AG04450 (cell line): ENCODE measurements at regions of chr3 and their contacts with region 1.

Region 1: DNA sequence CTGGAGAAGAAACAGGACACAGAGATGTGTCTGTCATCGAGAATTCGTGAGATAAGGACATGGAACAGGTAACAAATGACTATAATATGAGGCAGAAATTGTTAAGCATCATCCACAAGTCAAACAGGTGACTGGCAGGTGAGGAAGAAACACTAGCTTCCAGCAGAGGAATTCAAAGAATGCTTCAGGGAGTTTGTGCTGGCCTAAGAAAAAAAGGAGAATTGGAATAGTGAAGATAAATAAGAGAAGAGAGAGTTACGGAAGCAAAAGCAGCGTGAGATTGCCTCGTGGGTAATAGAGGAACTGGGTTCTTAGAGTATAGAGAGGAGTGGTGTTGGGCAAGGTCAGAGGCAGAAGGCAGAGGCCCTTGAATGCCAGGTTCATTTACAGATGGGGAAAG is 22.9 kb upstream of the FGF12 start:
- DNase-seq: no peak
- H3K4me3 ChIP-seq: no peak overlapping the region
- H3K27ac ChIP-seq: no peak overlapping the region
- H3K27me3 ChIP-seq: no peaks in the 10 kb centered on the region
- CTCF ChIP-seq: no peak

Region 2: DNA sequence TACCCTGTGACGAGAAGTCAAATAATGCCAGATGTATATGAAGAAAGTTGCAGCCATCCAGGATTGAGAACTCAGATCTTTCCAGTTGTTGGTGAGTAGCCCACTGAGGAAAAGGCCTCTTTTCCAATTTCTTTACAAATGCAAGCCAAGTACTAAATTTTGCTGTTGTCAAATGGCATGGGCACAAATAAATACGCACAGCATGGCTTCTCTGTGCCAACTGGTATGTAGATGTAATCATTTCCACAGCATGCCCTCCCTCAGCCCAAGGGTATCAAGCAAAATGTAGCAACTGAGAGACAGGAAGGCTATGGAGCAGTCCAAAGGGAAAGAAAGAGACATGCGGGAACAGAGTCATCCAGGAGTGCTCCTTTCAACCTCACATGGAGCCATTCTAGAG is 128.3 kb before region 1 on chr3:
- CTCF ChIA-PET with region 1: interaction called, 14 read pairs
- POLR2A ChIA-PET with region 1: no interaction called
- DNase-seq: no peak
- H3K4me3 ChIP-seq: no peak overlapping the region
- H3K27ac ChIP-seq: no peak overlapping the region
- H3K27me3 ChIP-seq: no peaks in the 10 kb centered on the region
- CTCF ChIP-seq: no peak

Region 3: GRCh38 chr3:192700885-192701284 is 49.3 kb before region 1 on chr3:
- CTCF ChIA-PET with region 1: interaction called, 13 read pairs
- POLR2A ChIA-PET with region 1: no interaction called
- DNase-seq: no peak
- H3K4me3 ChIP-seq: no peak overlapping the region
- H3K27ac ChIP-seq: no peak overlapping the region
- H3K27me3 ChIP-seq: no peaks in the 10 kb centered on the region
- CTCF ChIP-seq: no peak